Activated CD8-positive, alpha-beta T cell treated with anti-CD3 and anti-CD28 coated beads for 36 hours (primary cell): ENCODE measurements at regions of chr15 and their contacts with region 1.

Region 1: GRCh38 chr15:65184868-65185738 is at the start of gene CLPX:
- DNase-seq: peak; percentile 94
- ATAC-seq: peak; percentile 91
- H3K4me3 Mint-ChIP-seq: peak within 1 kb of the TSS; percentile 94
- H3K27ac Mint-ChIP-seq: peak within 1 kb of the TSS; percentile 96
- H3K4me1 Mint-ChIP-seq: peaks cover 22% of the 10 kb centered on the region
- H3K27me3 Mint-ChIP-seq: no peaks in the 10 kb centered on the region
- CTCF ChIP-seq: no peak
- total RNA-seq, gene CLPX: 76.7 to 77.4 TPM

Region 2: GRCh38 chr15:65201905-65202304 is 16.8 kb after region 1 on chr15:
- CTCF ChIA-PET with region 1: no interaction called
- POLR2A ChIA-PET with region 1: no interaction called
- intact Hi-C with region 1: no loop called
- DNase-seq: no peak
- ATAC-seq: no peak
- H3K4me3 Mint-ChIP-seq: no peak overlapping the region
- H3K27ac Mint-ChIP-seq: no peak overlapping the region
- H3K4me1 Mint-ChIP-seq: no peaks in the 10 kb centered on the region
- H3K27me3 Mint-ChIP-seq: no peaks in the 10 kb centered on the region
- CTCF ChIP-seq: no peak

Region 3: GRCh38 chr15:65286704-65287519 is 101.8 kb after region 1 on chr15 and contains the start of gene PARP16:
- CTCF ChIA-PET with region 1: interaction called, 10 read pairs
- POLR2A ChIA-PET with region 1: interaction called, 18 read pairs
- intact Hi-C with region 1: no loop called
- DNase-seq: peak; percentile 94
- ATAC-seq: peak; percentile 98
- H3K4me3 Mint-ChIP-seq: peak within 1 kb of the TSS; percentile 87
- H3K27ac Mint-ChIP-seq: peak within 1 kb of the TSS; percentile 90
- H3K4me1 Mint-ChIP-seq: peaks cover 32% of the 10 kb centered on the region
- H3K27me3 Mint-ChIP-seq: no peaks in the 10 kb centered on the region
- CTCF ChIP-seq: no peak
- total RNA-seq, gene PARP16: 17.9 to 20.5 TPM

Region 4: DNA sequence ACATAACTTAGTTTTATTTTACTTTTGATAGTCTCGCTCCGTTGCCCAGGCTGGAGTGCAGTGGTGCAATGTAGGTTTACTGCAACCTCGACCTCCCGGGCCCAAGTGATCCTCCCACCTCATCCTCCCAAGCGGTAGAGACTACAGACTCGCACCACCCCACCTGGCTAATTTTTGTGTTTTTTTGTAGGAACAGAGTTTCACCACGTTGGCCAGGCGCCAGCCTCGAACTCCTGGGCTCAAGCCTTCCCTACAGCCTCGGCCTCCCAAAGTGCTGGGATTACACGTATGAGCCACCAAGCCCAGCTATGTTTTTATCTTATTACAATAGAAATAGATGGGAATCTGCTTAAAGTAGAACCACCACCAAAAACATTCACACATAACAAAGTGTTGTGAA is 113.6 kb after region 1 on chr15:
- CTCF ChIA-PET with region 1: interaction called, 42 read pairs
- POLR2A ChIA-PET with region 1: interaction called, 52 read pairs
- intact Hi-C with region 1: loop called (anchors 2 kb)
- DNase-seq: no peak
- ATAC-seq: no peak
- H3K4me3 Mint-ChIP-seq: peak overlapping the region; percentile 81
- H3K27ac Mint-ChIP-seq: peak overlapping the region; percentile 87
- H3K4me1 Mint-ChIP-seq: peaks cover 34% of the 10 kb centered on the region
- H3K27me3 Mint-ChIP-seq: no peaks in the 10 kb centered on the region
- CTCF ChIP-seq: no peak

Region 5: DNA sequence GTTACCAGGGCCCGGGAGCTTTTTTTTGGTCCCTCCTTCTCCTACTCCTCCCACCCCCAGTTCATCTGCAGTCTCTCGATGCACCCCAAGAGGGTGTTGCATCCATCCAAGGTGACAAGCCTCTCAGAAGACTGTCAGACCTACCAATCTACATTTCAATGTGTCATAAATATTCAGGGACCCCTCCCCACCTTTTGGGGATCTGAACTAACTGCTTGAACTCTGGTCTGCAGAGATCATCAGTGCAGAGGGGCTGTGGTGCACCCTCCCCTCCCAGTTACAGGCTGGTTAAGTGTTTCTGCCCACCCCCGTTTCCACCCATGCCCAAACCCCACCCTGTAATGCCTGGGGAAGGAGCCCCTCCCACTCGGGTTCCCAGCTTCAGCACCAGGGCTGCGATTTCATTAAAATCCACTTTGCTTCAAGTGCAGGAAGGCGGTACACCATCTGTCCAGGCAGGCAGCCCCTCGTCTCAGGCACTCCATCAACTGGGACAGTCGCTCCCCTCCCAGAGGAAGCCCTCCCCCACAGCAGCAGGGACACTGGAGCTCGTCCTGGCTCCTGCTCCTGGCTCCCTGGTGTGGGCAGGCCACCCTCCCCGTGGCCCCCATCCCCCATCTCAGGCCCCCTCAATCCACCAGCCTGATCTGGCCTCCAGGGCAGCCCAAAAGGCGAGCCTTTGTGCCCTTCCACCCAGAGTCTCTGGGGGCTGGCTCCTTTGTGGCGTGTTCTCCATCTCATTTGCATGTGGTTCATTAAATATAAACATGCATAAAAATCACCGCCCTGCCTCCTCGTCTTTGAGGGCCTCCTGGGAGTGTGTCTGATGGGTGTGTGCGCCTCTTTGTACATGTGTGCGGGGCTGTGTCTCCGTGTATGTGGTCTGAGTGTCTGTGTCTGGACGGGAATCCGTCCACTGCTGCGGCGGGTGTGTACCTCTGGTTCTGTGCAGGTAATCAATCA is 151.7 kb after region 1 on chr15:
- CTCF ChIA-PET with region 1: no interaction called
- POLR2A ChIA-PET with region 1: no interaction called
- intact Hi-C with region 1: no loop called
- DNase-seq: no peak
- ATAC-seq: no peak
- H3K4me3 Mint-ChIP-seq: no peak overlapping the region
- H3K27ac Mint-ChIP-seq: no peak overlapping the region
- H3K4me1 Mint-ChIP-seq: no peaks in the 10 kb centered on the region
- H3K27me3 Mint-ChIP-seq: peaks cover 6% of the 10 kb centered on the region
- CTCF ChIP-seq: no peak

Region 6: DNA sequence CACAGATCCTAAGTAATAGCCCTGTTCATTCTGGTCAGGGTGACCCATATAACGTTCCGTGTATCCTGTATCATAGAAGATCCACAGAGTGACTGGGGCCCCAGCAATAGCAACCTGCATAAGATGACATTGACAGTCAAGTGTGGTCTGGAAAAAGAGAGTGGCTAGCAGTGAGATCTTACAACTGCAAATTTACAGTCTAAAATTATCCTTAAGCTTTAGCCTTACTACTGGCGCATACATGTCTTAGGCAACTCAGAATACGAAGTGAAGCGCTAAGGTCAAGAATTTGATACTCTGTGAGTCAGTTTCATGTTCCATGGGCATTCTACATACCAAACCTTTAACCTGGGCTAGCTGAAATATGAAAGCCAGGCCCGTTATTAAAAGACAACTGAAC is 266.9 kb after region 1 on chr15:
- CTCF ChIA-PET with region 1: no interaction called
- POLR2A ChIA-PET with region 1: no interaction called
- intact Hi-C with region 1: no loop called
- DNase-seq: no peak
- ATAC-seq: no peak
- H3K4me3 Mint-ChIP-seq: no peak overlapping the region
- H3K27ac Mint-ChIP-seq: no peak overlapping the region
- H3K4me1 Mint-ChIP-seq: no peaks in the 10 kb centered on the region
- H3K27me3 Mint-ChIP-seq: no peaks in the 10 kb centered on the region
- CTCF ChIP-seq: no peak